Right ventricle myocardium superior (tissue), 1 donor: ENCODE measurements at regions of chr19 and their contacts with region 1.

Region 1: GRCh38 chr19:38707512-38708114 is 36.7 kb downstream of the CAPN12 start:
- DNase-seq: peak; percentile 81
- ATAC-seq: peak; percentile 8

Region 2: GRCh38 chr19:38663957-38664502 is 43.6 kb before region 1 on chr19:
- intact Hi-C with region 1: loop called (anchors 5 kb)
- DNase-seq: peak; percentile 75
- ATAC-seq: peak; percentile 63

Region 3: DNA sequence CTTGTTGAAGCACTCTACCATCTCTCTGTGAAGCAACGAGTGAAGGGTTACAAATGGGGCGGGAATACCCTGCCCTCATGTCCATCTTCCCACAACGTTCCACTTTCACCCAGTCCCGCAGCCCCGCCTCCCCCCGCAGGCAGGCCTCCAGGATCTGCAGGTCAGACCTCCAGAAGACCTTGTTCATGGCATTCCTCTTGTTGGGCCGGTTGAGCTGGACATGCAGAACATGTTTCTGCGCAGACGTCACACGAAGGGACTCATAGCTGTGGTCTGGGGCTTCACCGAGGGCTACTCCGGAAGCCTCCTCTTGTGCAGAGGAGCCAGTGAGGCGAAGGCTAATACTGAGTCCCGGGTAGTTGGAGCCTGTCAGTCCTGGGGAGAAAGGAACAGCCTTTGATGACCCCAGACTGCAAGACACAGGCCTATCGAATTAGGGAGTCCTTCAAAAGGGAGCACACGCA is 123.6 kb after region 1 on chr19:
- intact Hi-C with region 1: no loop called
- DNase-seq: peak; percentile 86
- ATAC-seq: peak; percentile 75